Panc1 (cell line): ENCODE measurements at regions of chr11 and their contacts with region 1.

Region 1: GRCh38 chr11:102323542-102324251 is 6.4 kb downstream of the BIRC3 start:
- DNase-seq: no peak
- ATAC-seq: no peak
- H3K4me3 ChIP-seq: no peak overlapping the region
- H3K27ac ChIP-seq: peak overlapping the region; percentile 93
- H3K4me1 ChIP-seq: peaks cover 44% of the 10 kb centered on the region
- H3K27me3 ChIP-seq: no peaks in the 10 kb centered on the region
- CTCF ChIP-seq: no peak

Region 2: GRCh38 chr11:101215069-101215468 is 1108.6 kb before region 1 on chr11:
- CTCF ChIA-PET with region 1: no interaction called
- POLR2A ChIA-PET with region 1: no interaction called
- in situ Hi-C with region 1: no loop called
- intact Hi-C with region 1: no loop called
- DNase-seq: no peak
- ATAC-seq: no peak
- H3K4me3 ChIP-seq: no peak overlapping the region
- H3K27ac ChIP-seq: no peak overlapping the region
- H3K4me1 ChIP-seq: no peaks in the 10 kb centered on the region
- H3K27me3 ChIP-seq: no peaks in the 10 kb centered on the region
- CTCF ChIP-seq: no peak

Region 3: DNA sequence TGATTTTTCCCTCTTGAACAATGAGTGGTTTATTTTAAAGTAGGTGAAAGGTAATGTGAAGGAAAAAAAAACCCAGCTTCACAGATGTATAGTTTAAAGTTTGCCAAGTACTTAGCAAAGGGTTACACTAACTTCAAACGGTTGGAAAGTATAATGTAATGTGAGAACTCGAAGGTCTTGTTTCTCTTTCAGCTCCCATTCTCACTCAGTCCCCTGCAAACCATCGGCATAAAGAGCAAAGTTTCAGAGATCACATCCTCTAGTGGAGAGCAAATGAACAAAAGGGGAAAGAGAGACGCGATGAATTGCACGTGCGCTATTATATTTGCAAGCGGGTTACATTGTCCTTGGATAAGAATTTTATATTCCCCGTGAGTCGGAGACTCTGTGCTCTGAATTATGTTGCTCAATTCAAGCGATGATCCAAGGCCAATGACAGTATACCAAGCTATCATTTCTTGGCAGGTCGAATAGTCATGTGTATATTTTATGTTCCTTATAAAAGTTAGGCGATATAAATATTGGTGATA is 44.0 kb before region 1 on chr11:
- CTCF ChIA-PET with region 1: no interaction called
- POLR2A ChIA-PET with region 1: no interaction called
- in situ Hi-C with region 1: loop called (anchors 5 kb)
- intact Hi-C with region 1: no loop called
- DNase-seq: no peak
- ATAC-seq: peak; percentile 75
- H3K4me3 ChIP-seq: peak overlapping the region; percentile 14 to 41
- H3K27ac ChIP-seq: peak overlapping the region; percentile 52
- H3K4me1 ChIP-seq: peaks cover 11% of the 10 kb centered on the region
- H3K27me3 ChIP-seq: no peaks in the 10 kb centered on the region
- CTCF ChIP-seq: peak; percentile 54

Region 4: DNA sequence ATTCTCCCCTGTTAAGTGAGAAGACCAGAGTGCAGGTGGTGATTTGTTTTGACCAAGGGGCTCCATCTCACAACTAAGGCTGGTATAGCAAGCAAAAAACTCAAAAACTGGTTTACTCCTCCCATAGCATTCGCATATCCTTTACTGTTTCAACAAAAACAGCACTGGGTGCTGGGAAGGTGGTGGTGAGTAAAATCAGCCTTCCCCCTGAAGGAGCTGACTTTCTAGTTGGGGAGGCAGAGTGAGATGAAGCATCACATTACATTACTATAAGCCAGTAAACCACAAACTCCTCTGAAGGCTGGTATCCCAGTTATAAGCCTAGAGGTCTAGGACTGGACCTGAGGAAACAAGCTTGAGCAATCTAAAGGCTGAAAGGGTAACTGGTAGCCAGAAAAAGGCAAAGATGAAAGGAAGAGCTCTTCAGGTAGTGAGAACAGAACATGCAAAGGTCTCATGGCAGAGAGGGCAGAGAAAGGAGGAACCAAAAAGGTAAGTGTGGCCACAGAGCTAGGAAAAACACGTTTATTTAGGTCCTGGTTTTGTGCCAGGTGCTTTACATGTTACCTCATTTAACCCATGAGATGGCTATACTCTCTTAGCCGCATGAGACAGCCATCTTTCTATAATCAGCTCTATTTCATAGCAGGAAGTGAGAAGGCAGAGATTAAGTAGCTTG is 106.6 kb after region 1 on chr11:
- CTCF ChIA-PET with region 1: no interaction called
- POLR2A ChIA-PET with region 1: no interaction called
- in situ Hi-C with region 1: no loop called
- intact Hi-C with region 1: no loop called
- DNase-seq: no peak
- ATAC-seq: peak; percentile 51
- H3K4me3 ChIP-seq: no peak overlapping the region
- H3K27ac ChIP-seq: peak overlapping the region; percentile 13
- H3K4me1 ChIP-seq: peaks cover 40% of the 10 kb centered on the region
- H3K27me3 ChIP-seq: no peaks in the 10 kb centered on the region
- CTCF ChIP-seq: no peak

Region 5: GRCh38 chr11:102640946-102641345 is 317.2 kb after region 1 on chr11:
- CTCF ChIA-PET with region 1: no interaction called
- POLR2A ChIA-PET with region 1: no interaction called
- in situ Hi-C with region 1: no loop called
- intact Hi-C with region 1: no loop called
- DNase-seq: no peak
- ATAC-seq: no peak
- H3K4me3 ChIP-seq: no peak overlapping the region
- H3K27ac ChIP-seq: no peak overlapping the region
- H3K4me1 ChIP-seq: no peaks in the 10 kb centered on the region
- H3K27me3 ChIP-seq: no peaks in the 10 kb centered on the region
- CTCF ChIP-seq: no peak